Esophagus muscularis mucosa (tissue), 4 donors: ENCODE measurements at regions of chr12 and their contacts with region 1.

Region 1: GRCh38 chr12:128637642-128638606 is 185.8 kb downstream of the SLC15A4 start:
- DNase-seq: no peak
- H3K4me3 ChIP-seq: no peak overlapping the region
- H3K27ac ChIP-seq: no peak overlapping the region
- H3K4me1 ChIP-seq: peaks cover 0 to 3% (median 0%) of the 10 kb centered on the region in 4 donors
- H3K27me3 ChIP-seq: no peaks in the 10 kb centered on the region
- CTCF ChIP-seq: no peak
- EP300 ChIP-seq: no peak
- POLR2A ChIP-seq: no peak

Region 2: DNA sequence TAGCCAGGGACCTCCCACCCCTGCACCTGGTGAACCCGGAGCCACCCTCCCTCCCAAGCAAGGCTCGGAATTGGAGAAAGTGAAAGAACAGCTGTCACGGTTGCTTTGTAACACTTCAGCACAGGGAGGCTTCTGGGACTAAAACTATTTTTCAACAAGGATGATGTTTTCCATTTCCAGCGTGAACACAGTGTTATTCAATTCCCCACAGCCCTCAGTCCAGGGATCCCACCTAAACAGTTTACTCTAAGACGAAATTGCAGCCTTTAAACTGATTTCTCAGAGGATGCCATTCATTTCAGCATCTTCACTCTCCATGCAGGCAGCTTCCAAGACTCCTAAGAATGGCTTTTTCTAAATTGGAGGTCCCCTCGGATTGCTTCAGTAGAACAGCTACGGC is 43.4 kb before region 1 on chr12:
- intact Hi-C with region 1: no loop called
- DNase-seq: no peak
- H3K4me3 ChIP-seq: no peak overlapping the region
- H3K27ac ChIP-seq: no peak overlapping the region
- H3K4me1 ChIP-seq: peaks cover 0 to 6% (median 0%) of the 10 kb centered on the region in 4 donors
- H3K27me3 ChIP-seq: peaks cover 0 to 13% (median 0%) of the 10 kb centered on the region in 4 donors
- CTCF ChIP-seq: no peak
- EP300 ChIP-seq: no peak
- POLR2A ChIP-seq: no peak

Region 3: DNA sequence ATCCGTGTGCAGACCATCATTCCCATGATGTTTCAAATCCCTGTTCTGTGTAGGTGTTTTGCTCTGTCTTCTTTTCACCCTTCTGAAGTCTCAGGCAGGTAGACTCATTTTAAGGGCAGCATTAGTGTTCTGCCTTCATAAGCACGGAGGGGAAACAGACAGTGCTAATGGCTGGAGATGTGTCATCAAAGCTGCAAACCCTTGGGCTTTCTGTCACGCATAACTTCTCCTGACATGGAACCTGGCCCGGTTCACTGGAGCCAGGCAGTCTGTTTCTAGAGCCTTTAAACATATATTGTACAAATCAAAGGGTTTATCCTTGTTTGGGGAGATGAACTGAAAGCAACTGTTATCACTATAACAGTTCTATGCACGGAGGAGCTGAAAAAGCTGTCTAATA is 1124.5 kb after region 1 on chr12:
- intact Hi-C with region 1: loop called (anchors 10 kb)
- DNase-seq: no peak
- H3K4me3 ChIP-seq: no peak overlapping the region
- H3K27ac ChIP-seq: no peak overlapping the region
- H3K4me1 ChIP-seq: no peaks in the 10 kb centered on the region
- H3K27me3 ChIP-seq: peaks cover 0 to 13% (median 0%) of the 10 kb centered on the region in 4 donors
- CTCF ChIP-seq: no peak
- EP300 ChIP-seq: no peak
- POLR2A ChIP-seq: no peak